ENCODE measurements at regions of chr1 and their contacts with region 1.

Region 1: GRCh38 chr1:246888522-246888921 is 43.2 kb downstream of the AHCTF1 start:
- DNase-seq: no peak
- ATAC-seq: no peak
- H3K4me3 ChIP-seq: no peak overlapping the region
- H3K4me3 Mint-ChIP-seq: no peak overlapping the region
- H3K27ac ChIP-seq: no peak overlapping the region
- H3K27ac Mint-ChIP-seq: no peak overlapping the region
- H3K4me1 ChIP-seq: no peaks in the 10 kb centered on the region
- H3K4me1 Mint-ChIP-seq: no peaks in the 10 kb centered on the region
- H3K27me3 ChIP-seq: no peaks in the 10 kb centered on the region
- H3K27me3 Mint-ChIP-seq: no peaks in the 10 kb centered on the region
- CTCF ChIP-seq: no peak

Region 2: DNA sequence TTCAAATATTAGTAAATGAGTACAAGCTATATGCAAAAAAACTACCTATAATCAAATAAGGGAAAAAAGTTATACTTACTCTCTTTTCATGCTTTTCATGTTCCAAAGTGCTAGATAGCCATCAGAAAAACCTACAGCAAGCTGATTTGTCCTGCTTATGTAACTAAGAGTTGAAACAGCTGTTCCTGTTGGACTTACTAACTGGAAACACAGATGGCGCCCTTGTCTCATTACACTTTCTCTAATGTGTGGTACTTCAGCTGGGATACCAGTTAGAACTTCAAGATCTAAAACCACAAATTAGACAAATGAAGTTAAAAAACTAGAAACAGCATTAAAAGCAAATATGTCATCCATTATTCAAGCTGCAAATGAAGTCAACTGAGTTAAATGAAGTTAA is 18.9 kb after region 1 on chr1:
- CTCF ChIA-PET with region 1: no interaction called
- POLR2A ChIA-PET with region 1: no interaction called
- intact Hi-C with region 1: no loop called
- DNase-seq: peak in 4 of 14 experiments; percentile 36 to 65 (median 54)
- ATAC-seq: peak; percentile 54
- H3K4me3 ChIP-seq: no peak overlapping the region
- H3K4me3 Mint-ChIP-seq: no peak overlapping the region
- H3K27ac ChIP-seq: no peak overlapping the region
- H3K27ac Mint-ChIP-seq: no peak overlapping the region
- H3K4me1 ChIP-seq: no peaks in the 10 kb centered on the region
- H3K4me1 Mint-ChIP-seq: peaks cover 10% of the 10 kb centered on the region
- H3K27me3 ChIP-seq: no peaks in the 10 kb centered on the region
- H3K27me3 Mint-ChIP-seq: no peaks in the 10 kb centered on the region
- CTCF ChIP-seq: peak; percentile 25

Region 3: GRCh38 chr1:246925997-246926626 is 37.6 kb after region 1 on chr1:
- CTCF ChIA-PET with region 1: no interaction called
- POLR2A ChIA-PET with region 1: interaction called, 6 read pairs
- intact Hi-C with region 1: loop called in 1 of 2 experiments (anchors 2 kb)
- DNase-seq: no peak
- ATAC-seq: no peak
- H3K4me3 ChIP-seq: no peak overlapping the region
- H3K4me3 Mint-ChIP-seq: no peak overlapping the region
- H3K27ac ChIP-seq: no peak overlapping the region
- H3K27ac Mint-ChIP-seq: no peak overlapping the region
- H3K4me1 ChIP-seq: peaks cover 37% of the 10 kb centered on the region
- H3K4me1 Mint-ChIP-seq: peaks cover 73% of the 10 kb centered on the region
- H3K27me3 ChIP-seq: no peaks in the 10 kb centered on the region
- H3K27me3 Mint-ChIP-seq: no peaks in the 10 kb centered on the region
- CTCF ChIP-seq: no peak